ENCODE measurements at regions of chr20 and their contacts with region 1.

Region 1: DNA sequence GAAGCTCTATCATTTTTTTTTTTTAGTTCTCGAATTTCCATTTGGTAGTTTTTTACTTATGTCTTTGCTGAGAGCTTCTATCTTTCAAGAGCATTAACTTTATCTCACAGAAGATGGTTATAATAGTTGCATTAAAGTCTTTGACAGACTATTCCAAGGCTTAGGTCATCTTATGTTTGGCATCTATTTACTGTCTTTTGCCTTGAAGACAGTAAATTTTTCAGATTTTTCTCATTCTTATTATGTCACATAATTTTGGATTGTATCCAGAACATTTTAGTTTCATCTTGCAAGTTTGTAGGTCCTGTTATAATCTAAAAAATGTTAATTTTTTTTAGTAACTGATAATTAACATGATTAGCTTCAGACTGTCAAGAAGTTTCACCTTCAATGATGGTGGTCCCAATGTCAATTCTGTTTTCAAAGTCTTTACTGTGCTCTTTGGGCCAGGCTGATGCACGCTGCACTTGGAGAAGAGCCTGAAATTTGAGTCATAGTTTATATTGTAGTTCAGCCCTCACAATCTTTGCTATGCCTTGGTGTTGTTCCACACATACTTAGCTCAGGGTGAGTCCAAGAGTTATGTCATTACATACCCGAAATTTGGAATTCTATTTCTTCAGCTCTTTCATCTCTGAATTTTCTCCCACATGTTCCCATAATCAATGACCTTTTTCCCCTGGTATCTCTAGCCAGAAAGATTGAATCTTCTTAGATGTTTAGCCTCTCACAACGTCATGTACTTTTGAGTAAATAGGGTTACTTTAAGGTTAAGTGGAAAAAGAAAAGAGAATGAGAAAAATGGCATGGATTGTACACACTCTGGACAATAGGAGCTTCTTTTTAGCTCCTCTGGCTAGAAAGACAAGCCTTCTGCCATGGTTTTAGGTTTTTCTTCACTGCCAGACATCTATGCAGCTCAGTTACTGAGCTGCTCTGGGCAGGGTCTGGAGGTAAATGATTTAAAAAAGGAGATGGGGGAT is 110.3 kb upstream of the BTBD3 start:
- DNase-seq: no peak
- ATAC-seq: peak in 4 of 8 donors; percentile 43 to 81 (median 70)
- H3K4me3 ChIP-seq: no peak overlapping the region
- H3K27ac ChIP-seq: no peak overlapping the region
- H3K4me1 ChIP-seq: peaks cover 0 to 3% (median 0%) of the 10 kb centered on the region in 9 donors
- H3K27me3 ChIP-seq: no peaks in the 10 kb centered on the region
- CTCF ChIP-seq: no peak

Region 2: DNA sequence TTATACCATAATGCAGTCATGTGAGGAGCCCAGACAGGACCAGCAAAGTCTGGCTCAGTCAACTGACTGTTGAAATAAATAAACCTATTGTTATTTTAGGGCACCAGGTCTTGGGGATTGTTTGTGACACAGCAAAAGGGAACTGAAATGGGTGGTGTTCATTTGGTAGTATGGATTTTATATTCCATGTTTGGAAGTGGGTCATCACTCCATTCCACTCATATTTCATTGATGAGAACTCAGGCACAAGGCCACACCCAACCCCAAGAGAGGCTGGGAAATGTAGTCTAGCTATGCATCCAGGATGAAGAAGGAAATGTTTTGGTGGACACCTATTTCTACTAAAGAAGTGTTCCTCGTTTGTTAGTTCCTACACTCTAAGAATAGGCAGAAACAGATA is 45.4 kb after region 1 on chr20:
- intact Hi-C with region 1: loop called in 1 of 10 experiments (anchors 2 kb)
- DNase-seq: no peak
- ATAC-seq: no peak
- H3K4me3 ChIP-seq: no peak overlapping the region
- H3K27ac ChIP-seq: no peak overlapping the region
- H3K4me1 ChIP-seq: peaks cover 0 to 3% (median 0%) of the 10 kb centered on the region in 9 donors
- H3K27me3 ChIP-seq: no peaks in the 10 kb centered on the region
- CTCF ChIP-seq: no peak

Region 3: DNA sequence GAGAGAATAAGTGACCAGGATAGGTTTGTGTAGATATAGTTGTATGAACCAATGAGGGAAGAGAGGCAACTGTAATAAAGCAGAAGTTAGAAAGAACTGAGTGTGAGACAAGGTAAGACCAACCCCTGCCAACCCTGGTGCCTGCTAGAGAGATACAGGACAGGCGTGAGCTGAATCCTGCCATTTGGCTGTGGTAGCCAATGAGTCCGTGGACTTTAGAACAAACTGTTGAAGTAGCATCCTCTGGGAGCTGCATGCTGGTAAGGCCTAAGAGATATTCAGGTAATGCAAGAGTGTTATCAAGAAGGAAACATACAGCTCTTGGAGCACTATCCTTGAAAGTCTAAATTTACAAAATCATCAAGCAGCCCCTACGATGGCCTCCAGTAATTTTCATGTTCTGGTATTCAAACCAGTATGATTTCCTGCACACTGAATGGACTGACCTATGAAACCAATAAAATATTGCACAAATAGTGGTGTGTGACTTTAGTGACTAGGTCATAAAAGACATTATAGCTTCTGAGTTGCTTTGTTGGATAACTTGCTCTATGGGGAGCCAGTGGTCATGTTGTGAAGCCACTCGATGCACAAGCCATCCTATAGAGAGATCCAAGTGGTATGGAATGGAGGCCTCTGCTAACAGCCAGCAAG is 134.4 kb after region 1 on chr20:
- intact Hi-C with region 1: loop called in 1 of 10 experiments (anchors 5 kb)
- DNase-seq: no peak
- ATAC-seq: no peak
- H3K4me3 ChIP-seq: no peak overlapping the region
- H3K27ac ChIP-seq: no peak overlapping the region
- H3K4me1 ChIP-seq: no peaks in the 10 kb centered on the region
- H3K27me3 ChIP-seq: no peaks in the 10 kb centered on the region
- CTCF ChIP-seq: no peak